GM10248 (cell line): ENCODE measurements at regions of chr4 and their contacts with region 1.

Region 1: GRCh38 chr4:77819843-77820648 is 878 bp upstream of the CNOT6L start:
- DNase-seq: peak; percentile 94
- CTCF ChIP-seq: peak; percentile 1

Region 2: GRCh38 chr4:77862478-77863216 is 42.6 kb after region 1 on chr4 and contains the start of gene MRPL1:
- CTCF ChIA-PET with region 1: interaction called, 11 read pairs
- POLR2A ChIA-PET with region 1: interaction called, 9 read pairs
- DNase-seq: peak; percentile 80
- CTCF ChIP-seq: peak; percentile 24